CD4-positive, alpha-beta memory T cell (primary cell): ENCODE measurements at regions of chr13 and their contacts with region 1.

Region 1: DNA sequence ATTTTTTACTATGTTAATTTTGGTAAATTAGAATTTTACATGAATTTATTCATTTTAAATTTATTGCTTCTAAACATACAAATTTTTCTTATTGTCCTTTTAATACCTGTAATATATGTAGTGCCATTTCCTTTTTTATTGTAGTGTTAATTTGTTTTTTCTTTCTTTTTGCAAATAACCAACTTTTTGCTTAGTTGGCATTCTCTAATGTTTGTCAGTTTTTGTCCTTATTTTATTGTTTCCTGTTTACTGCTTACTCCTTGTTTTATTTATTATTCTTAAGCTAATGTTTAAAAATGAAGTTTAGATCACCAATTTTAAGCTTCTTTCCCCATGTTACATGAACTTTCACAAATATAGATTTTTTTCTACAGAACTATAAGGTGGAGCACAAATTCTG is 516.6 kb downstream of the SLITRK1 start:
- DNase-seq: no peak
- H3K4me3 ChIP-seq: no peak overlapping the region
- H3K4me3 Mint-ChIP-seq: no peak overlapping the region
- H3K27ac ChIP-seq: no peak overlapping the region
- H3K27ac Mint-ChIP-seq: no peak overlapping the region
- H3K4me1 ChIP-seq: no peaks in the 10 kb centered on the region
- H3K4me1 Mint-ChIP-seq: no peaks in the 10 kb centered on the region
- H3K27me3 ChIP-seq: no peaks in the 10 kb centered on the region
- H3K27me3 Mint-ChIP-seq: no peaks in the 10 kb centered on the region

Region 2: DNA sequence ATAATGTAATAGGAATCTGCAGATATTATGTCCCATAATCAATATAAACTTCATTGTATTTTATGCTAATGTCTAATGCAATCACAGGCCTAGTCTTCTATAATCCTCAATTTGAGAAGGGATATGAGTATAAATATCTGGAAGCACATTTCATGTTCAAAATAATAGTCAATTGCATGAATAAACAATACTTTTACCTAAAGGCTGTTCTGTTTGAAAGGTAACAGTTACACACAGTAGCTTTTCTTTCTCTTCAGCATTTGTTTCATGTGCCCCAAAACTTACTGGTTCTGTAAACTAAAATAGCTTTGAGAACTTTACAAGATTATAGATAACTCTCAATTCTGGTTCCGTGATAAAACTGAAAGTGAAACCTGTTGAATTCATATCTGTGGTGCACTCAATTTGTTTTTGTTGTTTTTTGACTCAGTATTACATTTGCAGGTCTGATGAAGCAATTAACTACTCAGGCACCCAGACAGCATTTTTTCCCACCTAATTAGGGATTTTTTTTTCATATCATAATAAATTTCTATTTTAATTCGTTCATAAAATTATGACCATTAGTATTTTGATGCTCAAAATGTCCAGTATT is 677.2 kb before region 1 on chr13:
- CTCF ChIA-PET with region 1: no interaction called
- POLR2A ChIA-PET with region 1: no interaction called
- intact Hi-C with region 1: loop called (anchors 5 kb)
- DNase-seq: peak in 4 of 5 donors; percentile 15 to 28 (median 24)
- H3K4me3 ChIP-seq: peak overlapping the region; percentile 5 to 34
- H3K4me3 Mint-ChIP-seq: peak overlapping the region; percentile 78 to 88 (median 85)
- H3K27ac ChIP-seq: peak overlapping the region; percentile 49
- H3K27ac Mint-ChIP-seq: peak overlapping the region; percentile 14 to 93 (median 87)
- H3K4me1 ChIP-seq: no peaks in the 10 kb centered on the region
- H3K4me1 Mint-ChIP-seq: peaks cover 14 to 29% (median 23%) of the 10 kb centered on the region in 4 donors
- H3K27me3 ChIP-seq: no peaks in the 10 kb centered on the region
- H3K27me3 Mint-ChIP-seq: no peaks in the 10 kb centered on the region

Region 3: DNA sequence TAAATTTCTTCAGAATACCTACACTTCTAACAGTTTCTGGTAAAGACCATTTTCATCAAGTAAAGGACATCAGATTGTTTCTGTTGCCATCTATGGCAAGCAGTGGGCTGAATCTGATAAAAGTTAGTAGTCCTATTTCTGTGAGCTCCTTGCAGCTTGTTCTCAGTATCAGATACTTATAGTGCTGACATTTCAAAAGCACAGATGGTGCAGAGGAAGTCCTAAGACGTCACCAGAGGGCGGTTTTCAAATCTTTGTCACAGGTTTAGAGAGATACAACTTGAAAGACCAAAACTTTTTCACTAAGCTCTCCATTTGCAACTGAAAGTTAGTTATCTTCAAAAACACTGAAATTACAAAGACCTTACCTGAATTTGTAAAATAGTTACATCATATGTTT is 203.2 kb before region 1 on chr13:
- CTCF ChIA-PET with region 1: no interaction called
- POLR2A ChIA-PET with region 1: no interaction called
- intact Hi-C with region 1: no loop called
- DNase-seq: no peak
- H3K4me3 ChIP-seq: no peak overlapping the region
- H3K4me3 Mint-ChIP-seq: no peak overlapping the region
- H3K27ac ChIP-seq: no peak overlapping the region
- H3K27ac Mint-ChIP-seq: no peak overlapping the region
- H3K4me1 ChIP-seq: no peaks in the 10 kb centered on the region
- H3K4me1 Mint-ChIP-seq: no peaks in the 10 kb centered on the region
- H3K27me3 ChIP-seq: no peaks in the 10 kb centered on the region
- H3K27me3 Mint-ChIP-seq: no peaks in the 10 kb centered on the region

Region 4: DNA sequence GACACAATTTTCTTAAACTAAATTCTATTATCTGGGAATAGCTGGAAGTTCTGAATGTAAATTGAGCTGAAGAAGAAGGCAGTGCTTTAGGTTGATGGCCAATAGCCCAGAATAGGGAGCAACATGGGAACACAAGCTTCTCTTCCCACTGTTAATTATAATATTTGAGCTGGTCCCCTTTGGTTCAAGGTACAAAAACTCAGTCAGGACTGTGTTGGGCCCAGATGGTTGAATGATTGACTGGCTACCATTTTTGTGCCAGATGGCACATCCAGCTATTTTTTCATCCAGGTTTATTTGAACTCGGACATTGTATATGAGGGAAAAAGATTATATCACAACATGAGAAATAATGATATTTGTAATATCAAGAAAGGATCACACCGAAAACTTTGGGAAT is 57.7 kb after region 1 on chr13:
- CTCF ChIA-PET with region 1: no interaction called
- POLR2A ChIA-PET with region 1: no interaction called
- intact Hi-C with region 1: no loop called
- DNase-seq: no peak
- H3K4me3 ChIP-seq: no peak overlapping the region
- H3K4me3 Mint-ChIP-seq: no peak overlapping the region
- H3K27ac ChIP-seq: no peak overlapping the region
- H3K27ac Mint-ChIP-seq: no peak overlapping the region
- H3K4me1 ChIP-seq: no peaks in the 10 kb centered on the region
- H3K4me1 Mint-ChIP-seq: no peaks in the 10 kb centered on the region
- H3K27me3 ChIP-seq: no peaks in the 10 kb centered on the region
- H3K27me3 Mint-ChIP-seq: no peaks in the 10 kb centered on the region